ENCODE measurements at regions of chr7 and their contacts with region 1.

Region 1: GRCh38 chr7:121416533-121416932 is 20.4 kb upstream of the FAM3C start:
- DNase-seq: no peak
- ATAC-seq: no peak
- H3K4me3 ChIP-seq: no peak overlapping the region
- H3K4me3 Mint-ChIP-seq: no peak overlapping the region
- H3K27ac ChIP-seq: no peak overlapping the region
- H3K27ac Mint-ChIP-seq: no peak overlapping the region
- H3K4me1 ChIP-seq: no peaks in the 10 kb centered on the region
- H3K4me1 Mint-ChIP-seq: no peaks in the 10 kb centered on the region
- H3K27me3 ChIP-seq: no peaks in the 10 kb centered on the region
- H3K27me3 Mint-ChIP-seq: peaks cover 0 to 10% (median 8%) of the 10 kb centered on the region in 5 donors

Region 2: GRCh38 chr7:120927454-120928103 is 489.0 kb before region 1 on chr7:
- CTCF ChIA-PET with region 1: no interaction called
- POLR2A ChIA-PET with region 1: no interaction called
- intact Hi-C with region 1: no loop called
- DNase-seq: no peak
- ATAC-seq: no peak
- H3K4me3 ChIP-seq: no peak overlapping the region
- H3K4me3 Mint-ChIP-seq: no peak overlapping the region
- H3K27ac ChIP-seq: no peak overlapping the region
- H3K27ac Mint-ChIP-seq: no peak overlapping the region
- H3K4me1 ChIP-seq: no peaks in the 10 kb centered on the region
- H3K4me1 Mint-ChIP-seq: no peaks in the 10 kb centered on the region
- H3K27me3 ChIP-seq: no peaks in the 10 kb centered on the region
- H3K27me3 Mint-ChIP-seq: peaks cover 25 to 39% (median 36%) of the 10 kb centered on the region in 5 donors

Region 3: GRCh38 chr7:121428855-121429489 is 12.4 kb after region 1 on chr7:
- CTCF ChIA-PET with region 1: no interaction called
- POLR2A ChIA-PET with region 1: no interaction called
- intact Hi-C with region 1: loop called in 1 of 2 experiments (anchors 2 kb)
- DNase-seq: no peak
- ATAC-seq: no peak
- H3K4me3 ChIP-seq: no peak overlapping the region
- H3K4me3 Mint-ChIP-seq: no peak overlapping the region
- H3K27ac ChIP-seq: no peak overlapping the region
- H3K27ac Mint-ChIP-seq: no peak overlapping the region
- H3K4me1 ChIP-seq: no peaks in the 10 kb centered on the region
- H3K4me1 Mint-ChIP-seq: peaks cover 0 to 16% (median 5%) of the 10 kb centered on the region in 7 donors
- H3K27me3 ChIP-seq: no peaks in the 10 kb centered on the region
- H3K27me3 Mint-ChIP-seq: peaks cover 0 to 12% (median 6%) of the 10 kb centered on the region in 5 donors

Region 4: GRCh38 chr7:121510296-121510695 is 93.8 kb after region 1 on chr7:
- CTCF ChIA-PET with region 1: no interaction called
- POLR2A ChIA-PET with region 1: no interaction called
- intact Hi-C with region 1: no loop called
- DNase-seq: peak in 6 of 9 donors; percentile 2 to 27 (median 10)
- ATAC-seq: no peak
- H3K4me3 ChIP-seq: no peak overlapping the region
- H3K4me3 Mint-ChIP-seq: no peak overlapping the region
- H3K27ac ChIP-seq: no peak overlapping the region
- H3K27ac Mint-ChIP-seq: peak overlapping the region in 1 of 9 donors; percentile 3
- H3K4me1 ChIP-seq: no peaks in the 10 kb centered on the region
- H3K4me1 Mint-ChIP-seq: no peaks in the 10 kb centered on the region
- H3K27me3 ChIP-seq: no peaks in the 10 kb centered on the region
- H3K27me3 Mint-ChIP-seq: peaks cover 0 to 13% (median 6%) of the 10 kb centered on the region in 5 donors

Measured in naive thymus-derived CD4-positive, alpha-beta T cell (primary cell).